ENCODE measurements at regions of chr19 and their contacts with region 1.

Region 1: DNA sequence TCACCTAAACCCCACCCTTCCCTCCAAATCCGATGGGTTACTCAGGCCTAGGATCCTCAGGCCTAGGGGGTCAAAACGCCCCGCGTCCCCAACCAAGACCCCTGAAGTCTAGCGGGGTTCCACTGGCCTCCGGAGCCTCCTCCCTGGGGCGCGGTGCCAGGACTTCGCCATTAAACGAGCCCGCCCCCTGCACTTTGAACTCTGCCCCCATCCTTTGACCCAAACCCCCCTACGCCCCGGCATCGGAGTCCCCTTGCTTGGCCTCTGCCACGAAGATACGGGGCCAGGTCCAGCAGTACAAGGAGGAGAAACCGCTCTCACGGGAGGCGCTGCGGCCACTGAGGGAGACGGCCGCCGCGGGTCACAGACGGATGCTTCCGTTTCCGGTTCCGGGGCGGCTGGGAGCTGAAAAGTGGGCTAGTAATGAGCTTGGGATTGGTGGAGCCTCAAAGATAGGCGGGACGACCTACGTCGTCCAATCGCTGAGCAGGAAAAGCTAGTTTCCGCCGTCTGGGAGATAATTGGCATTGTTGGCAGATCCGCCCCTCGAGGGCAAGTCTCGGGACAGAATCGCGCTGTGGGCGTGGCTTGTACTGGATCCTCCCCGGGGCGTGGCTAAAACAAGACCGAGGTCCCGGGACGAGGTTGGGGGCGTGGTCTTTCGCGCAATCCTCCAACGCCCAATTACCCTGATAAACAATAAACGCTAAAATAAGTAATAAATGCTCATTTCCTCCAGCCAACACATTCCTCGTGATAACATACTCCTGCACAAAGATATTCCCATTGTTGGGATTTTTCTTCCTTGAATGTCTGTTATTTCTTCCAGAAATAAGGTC is 5.7 kb upstream of the ZNF77 start:
- DNase-seq: peak; percentile 100
- H3K4me3 Mint-ChIP-seq: peak overlapping the region; percentile 96
- H3K27ac Mint-ChIP-seq: peak overlapping the region; percentile 96
- H3K4me1 Mint-ChIP-seq: peaks cover 27% of the 10 kb centered on the region
- H3K27me3 Mint-ChIP-seq: no peaks in the 10 kb centered on the region

Region 2: GRCh38 chr19:2702162-2703076 is 248.1 kb before region 1 on chr19 and contains the start of gene GNG7:
- CTCF ChIA-PET with region 1: no interaction called
- intact Hi-C with region 1: no loop called
- DNase-seq: peak; percentile 96
- H3K4me3 Mint-ChIP-seq: peak within 1 kb of the TSS; percentile 57
- H3K27ac Mint-ChIP-seq: no peak within 1 kb of the TSS
- H3K4me1 Mint-ChIP-seq: peaks cover 25% of the 10 kb centered on the region
- H3K27me3 Mint-ChIP-seq: no peaks in the 10 kb centered on the region
- total RNA-seq, gene GNG7: 0.74 to 1.1 TPM

Region 3: DNA sequence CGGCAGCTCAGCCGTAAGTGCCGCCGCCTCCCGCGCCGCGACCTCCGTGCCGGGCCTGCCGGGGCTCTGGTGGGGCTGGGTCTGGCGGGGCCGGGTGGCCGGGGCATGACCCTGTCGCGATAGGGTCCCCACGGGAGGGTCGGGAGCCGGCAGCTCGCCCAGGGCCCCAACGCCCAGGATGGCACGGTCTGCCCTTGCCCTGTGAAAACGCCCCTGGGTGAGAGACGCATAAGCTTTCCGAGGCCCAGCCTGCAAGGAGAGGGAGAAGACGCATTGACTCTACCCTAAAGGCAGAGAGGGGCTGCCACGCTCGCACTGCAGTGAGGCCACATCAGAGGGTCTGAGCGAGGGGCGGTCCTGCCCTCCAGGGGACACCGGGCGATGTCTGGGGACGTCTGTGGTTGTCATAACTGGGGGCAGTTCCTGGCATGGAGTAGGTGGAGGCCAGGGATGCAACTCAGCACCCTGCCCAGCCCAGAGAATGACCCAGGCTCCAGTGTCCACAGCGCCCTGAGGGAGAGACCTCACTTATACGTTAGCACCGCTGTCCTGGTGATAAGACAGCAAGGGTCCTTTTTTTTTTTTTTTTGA is 130.3 kb before region 1 on chr19:
- CTCF ChIA-PET with region 1: no interaction called
- intact Hi-C with region 1: no loop called
- DNase-seq: peak; percentile 27
- H3K4me3 Mint-ChIP-seq: peak overlapping the region; percentile 79
- H3K27ac Mint-ChIP-seq: no peak overlapping the region
- H3K4me1 Mint-ChIP-seq: peaks cover 10% of the 10 kb centered on the region
- H3K27me3 Mint-ChIP-seq: no peaks in the 10 kb centered on the region

Region 4: DNA sequence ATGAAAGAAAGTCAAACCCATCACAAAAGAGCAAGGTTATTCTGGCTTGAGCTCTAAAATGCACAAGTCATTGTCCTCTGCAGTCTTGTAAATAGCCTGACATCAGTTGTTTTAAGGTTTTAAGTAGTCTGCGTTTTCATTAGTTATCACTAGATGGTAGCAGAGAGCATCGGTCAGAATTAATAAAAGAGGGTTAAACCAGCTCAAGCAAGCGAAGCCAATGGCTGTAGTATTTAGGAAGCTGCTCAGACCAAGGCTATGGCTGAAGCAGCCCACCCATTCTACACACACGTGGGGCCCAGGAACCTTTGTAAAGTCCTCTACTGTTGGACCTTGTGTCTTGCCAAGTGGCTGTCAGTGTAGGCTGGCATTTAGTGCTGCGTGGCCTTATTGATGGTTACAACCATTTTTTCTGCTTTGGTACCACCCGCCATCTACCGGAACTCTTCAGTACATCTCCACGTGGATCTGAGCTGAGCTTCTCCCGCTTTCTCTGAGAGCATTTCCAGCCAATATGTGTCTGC is 63.1 kb before region 1 on chr19:
- CTCF ChIA-PET with region 1: interaction called, 9 read pairs
- intact Hi-C with region 1: loop called (anchors 2 kb)
- DNase-seq: peak; percentile 17
- H3K4me3 Mint-ChIP-seq: peak overlapping the region; percentile 20
- H3K27ac Mint-ChIP-seq: peak overlapping the region; percentile 50
- H3K4me1 Mint-ChIP-seq: peaks cover 18% of the 10 kb centered on the region
- H3K27me3 Mint-ChIP-seq: no peaks in the 10 kb centered on the region

Region 5: DNA sequence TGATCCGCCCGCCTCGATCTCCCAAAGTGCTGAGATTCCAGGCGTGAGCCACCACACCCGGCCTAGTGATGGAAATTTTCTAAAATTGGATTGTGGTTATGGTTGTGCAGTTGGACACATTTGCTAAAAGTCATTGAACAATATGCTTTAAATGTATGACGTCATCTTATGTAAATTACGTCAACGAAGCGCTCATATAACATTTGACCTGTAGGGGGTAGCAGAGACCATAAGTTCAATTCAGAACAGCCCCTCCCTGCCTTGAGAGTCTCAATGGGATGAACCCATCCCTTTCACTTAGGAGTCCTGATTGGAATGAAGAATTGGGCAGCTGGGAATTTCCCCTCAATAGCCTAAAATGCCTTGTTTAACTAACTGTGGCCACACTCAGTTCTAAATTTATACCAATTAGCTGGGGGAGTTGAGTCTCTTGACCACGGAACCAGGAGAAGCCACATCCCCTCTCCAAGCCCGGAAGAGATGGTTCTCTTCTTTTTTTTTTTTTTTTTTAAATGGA is 11.6 kb after region 1 on chr19:
- CTCF ChIA-PET with region 1: interaction called, 21 read pairs
- intact Hi-C with region 1: no loop called
- DNase-seq: peak; percentile 58
- H3K4me3 Mint-ChIP-seq: peak overlapping the region; percentile 22
- H3K27ac Mint-ChIP-seq: no peak overlapping the region
- H3K4me1 Mint-ChIP-seq: peaks cover 3% of the 10 kb centered on the region
- H3K27me3 Mint-ChIP-seq: no peaks in the 10 kb centered on the region

Region 6: GRCh38 chr19:3035542-3036118 is 85.1 kb after region 1 on chr19:
- CTCF ChIA-PET with region 1: interaction called, 3 read pairs
- intact Hi-C with region 1: loop called (anchors 2 kb)
- DNase-seq: peak; percentile 98
- H3K4me3 Mint-ChIP-seq: peak overlapping the region; percentile 87
- H3K27ac Mint-ChIP-seq: peak overlapping the region; percentile 94
- H3K4me1 Mint-ChIP-seq: peaks cover 19% of the 10 kb centered on the region
- H3K27me3 Mint-ChIP-seq: no peaks in the 10 kb centered on the region

Region 7: GRCh38 chr19:3108775-3109174 is 158.3 kb after region 1 on chr19:
- CTCF ChIA-PET with region 1: interaction called, 31 read pairs
- intact Hi-C with region 1: loop called (anchors 1 kb)
- DNase-seq: peak; percentile 77
- H3K4me3 Mint-ChIP-seq: no peak overlapping the region
- H3K27ac Mint-ChIP-seq: no peak overlapping the region
- H3K4me1 Mint-ChIP-seq: peaks cover 9% of the 10 kb centered on the region
- H3K27me3 Mint-ChIP-seq: no peaks in the 10 kb centered on the region

Region 8: GRCh38 chr19:3185482-3186376 is 235.2 kb after region 1 on chr19 and contains the start of gene NCLN:
- CTCF ChIA-PET with region 1: interaction called, 3 read pairs
- intact Hi-C with region 1: loop called (anchors 1 kb)
- DNase-seq: peak; percentile 95
- H3K4me3 Mint-ChIP-seq: peak within 1 kb of the TSS; percentile 98
- H3K27ac Mint-ChIP-seq: peak within 1 kb of the TSS; percentile 99
- H3K4me1 Mint-ChIP-seq: peaks cover 58% of the 10 kb centered on the region
- H3K27me3 Mint-ChIP-seq: no peaks in the 10 kb centered on the region
- total RNA-seq, gene NCLN: 38.4 to 42.9 TPM